ENCODE measurements at regions of chr12 and their contacts with region 1.

Region 1: DNA sequence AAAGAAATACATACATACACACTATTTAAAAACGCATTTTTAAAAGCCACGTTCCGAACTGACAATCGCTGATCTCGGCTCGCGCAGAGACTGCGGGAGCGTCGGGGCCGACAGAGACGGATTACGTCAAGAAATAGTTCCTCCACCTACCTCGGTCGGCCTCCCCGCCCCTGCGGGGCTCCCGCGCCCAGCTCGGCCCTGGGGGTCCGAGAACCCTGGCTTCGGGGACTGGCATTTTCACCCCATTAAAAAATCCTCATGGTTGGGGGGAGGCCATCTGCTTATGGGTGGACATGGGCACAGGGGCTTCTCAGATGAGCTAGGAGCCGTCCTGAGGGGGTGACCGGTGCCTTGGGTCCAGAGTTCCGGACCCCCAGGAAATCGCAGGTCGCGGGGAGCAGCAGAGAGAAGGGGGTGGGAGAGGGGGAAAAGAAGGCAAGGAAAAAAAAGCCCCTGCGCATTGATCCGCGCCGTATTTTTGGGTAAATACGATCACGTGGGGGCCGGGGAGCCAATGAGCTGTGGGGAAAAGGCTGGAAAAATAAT is 329 bp upstream of the HOXC9 start:
- DNase-seq: no peak
- H3K4me3 ChIP-seq: peak overlapping the region; percentile 73
- H3K27me3 ChIP-seq: peaks cover 2% of the 10 kb centered on the region; the same call in 1 of the 2 replicates
- CTCF ChIP-seq: no peak

Region 2: DNA sequence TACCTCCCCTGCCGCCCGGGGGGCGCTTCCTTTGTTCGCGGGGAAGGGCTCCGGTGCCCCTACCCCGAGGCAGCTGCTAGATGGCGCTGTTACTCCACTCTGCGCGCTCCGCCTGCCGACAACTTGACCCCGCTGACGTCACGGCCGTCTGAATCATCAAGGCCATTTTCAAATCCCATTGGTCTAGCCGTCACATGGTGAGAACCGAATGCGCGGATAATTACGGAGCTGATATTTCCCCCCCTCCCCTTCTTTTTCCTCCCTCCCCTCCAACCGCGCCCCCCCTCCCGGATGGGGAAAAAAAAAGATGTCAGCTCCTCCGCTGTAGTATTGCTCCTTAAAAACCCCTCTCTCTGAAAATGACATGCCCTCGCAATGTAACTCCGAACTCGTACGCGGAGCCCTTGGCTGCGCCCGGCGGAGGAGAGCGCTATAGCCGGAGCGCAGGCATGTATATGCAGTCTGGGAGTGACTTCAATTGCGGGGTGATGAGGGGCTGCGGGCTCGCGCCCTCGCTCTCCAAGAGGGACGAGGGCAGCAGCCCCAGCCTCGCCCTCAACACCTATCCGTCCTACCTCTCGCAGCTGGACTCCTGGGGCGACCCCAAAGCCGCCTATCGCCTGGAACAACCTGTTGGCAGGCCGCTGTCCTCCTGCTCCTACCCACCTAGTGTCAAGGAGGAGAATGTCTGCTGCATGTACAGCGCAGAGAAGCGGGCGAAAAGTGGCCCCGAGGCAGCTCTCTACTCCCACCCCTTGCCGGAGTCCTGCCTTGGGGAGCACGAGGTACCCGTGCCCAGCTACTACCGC is 14.5 kb before region 1 on chr12 and contains the start of gene HOXC10:
- CTCF ChIA-PET with region 1: interaction called, 81 read pairs
- POLR2A ChIA-PET with region 1: no interaction called
- DNase-seq: no peak
- H3K4me3 ChIP-seq: peak within 1 kb of the TSS; percentile 60
- H3K27me3 ChIP-seq: peaks cover 2% of the 10 kb centered on the region; the same call in 1 of the 2 replicates
- CTCF ChIP-seq: peak; percentile 83
- polyA plus RNA-seq, gene HOXC10: 13.9 and 14.9 TPM in 2 replicates

Region 3: DNA sequence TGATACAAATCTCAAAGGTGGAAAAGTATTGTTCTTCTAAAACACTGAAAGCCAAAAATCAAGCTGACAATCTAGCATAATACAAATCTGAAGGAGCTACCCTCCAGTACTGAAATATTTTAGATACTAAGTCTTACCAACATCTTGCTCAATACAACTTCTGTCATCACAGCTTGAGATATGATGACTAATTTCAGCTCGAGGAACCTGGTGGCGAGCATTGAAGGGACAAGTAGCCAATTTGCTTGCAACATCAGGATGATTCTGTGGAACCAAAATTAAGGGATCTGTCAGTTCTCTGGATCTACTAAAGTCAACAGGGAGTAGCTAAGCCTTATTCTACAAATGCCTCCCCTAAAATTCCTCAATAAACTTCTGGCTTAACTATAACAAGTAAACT is 463.4 kb after region 1 on chr12:
- CTCF ChIA-PET with region 1: no interaction called
- POLR2A ChIA-PET with region 1: no interaction called
- DNase-seq: peak; percentile 44
- H3K4me3 ChIP-seq: no peak overlapping the region
- H3K27me3 ChIP-seq: peaks cover 16% of the 10 kb centered on the region
- CTCF ChIP-seq: no peak